MCF 10A (cell line): ENCODE measurements at regions of chr2 and their contacts with region 1.

Region 1: GRCh38 chr2:207238831-207239701 is 73.3 kb upstream of the KLF7 start:
- DNase-seq: peak; percentile 99
- H3K4me3 Mint-ChIP-seq: no peak overlapping the region
- H3K27ac Mint-ChIP-seq: no peak overlapping the region
- H3K4me1 Mint-ChIP-seq: peaks cover 15% of the 10 kb centered on the region
- H3K27me3 Mint-ChIP-seq: no peaks in the 10 kb centered on the region
- CTCF ChIP-seq: no peak

Region 2: GRCh38 chr2:206981739-206982340 is 257.2 kb before region 1 on chr2:
- CTCF ChIA-PET with region 1: interaction called, 14 read pairs
- POLR2A ChIA-PET with region 1: interaction called, 4 read pairs
- intact Hi-C with region 1: loop called (anchors 5 kb)
- DNase-seq: peak; percentile 76
- H3K4me3 Mint-ChIP-seq: no peak overlapping the region
- H3K27ac Mint-ChIP-seq: no peak overlapping the region
- H3K4me1 Mint-ChIP-seq: peaks cover 22% of the 10 kb centered on the region
- H3K27me3 Mint-ChIP-seq: no peaks in the 10 kb centered on the region
- CTCF ChIP-seq: peak; percentile 88

Region 3: DNA sequence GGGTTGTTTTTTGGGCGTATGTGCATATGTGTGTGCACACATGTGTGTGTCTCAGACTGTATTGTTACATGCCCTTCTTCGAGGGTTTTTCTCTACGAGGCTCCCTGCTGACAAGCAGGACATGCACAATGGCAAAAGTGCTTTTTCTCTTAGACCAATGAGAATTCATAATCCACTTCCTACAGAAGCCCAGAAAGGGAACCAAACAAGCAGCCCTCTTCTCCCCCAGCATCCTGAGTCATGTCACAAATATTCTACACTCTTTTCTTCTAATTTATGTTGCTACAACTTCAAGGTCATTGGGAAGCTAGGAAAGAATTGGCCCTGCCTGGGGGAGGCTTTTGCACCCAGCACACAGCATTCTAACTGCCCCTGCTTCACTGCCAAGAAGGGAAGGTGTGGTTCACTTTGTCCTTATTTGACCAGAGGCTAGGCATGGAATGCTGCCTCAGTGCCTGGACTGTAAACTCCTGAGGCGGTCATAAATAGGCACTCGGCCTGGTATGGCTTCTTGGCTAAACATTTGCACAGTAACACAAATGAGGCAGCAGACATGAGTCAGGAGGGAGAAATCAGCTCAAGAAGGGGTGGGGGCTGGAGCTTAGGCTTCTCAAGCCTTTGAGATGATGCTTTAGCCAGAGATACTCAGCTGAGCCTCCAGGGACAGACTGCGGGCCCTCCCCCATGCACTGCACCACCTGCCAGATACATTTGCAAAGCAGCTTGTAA is 19.4 kb after region 1 on chr2:
- CTCF ChIA-PET with region 1: interaction called, 9 read pairs
- POLR2A ChIA-PET with region 1: interaction called, 131 read pairs
- intact Hi-C with region 1: no loop called
- DNase-seq: peak; percentile 91
- H3K4me3 Mint-ChIP-seq: peak overlapping the region; percentile 26
- H3K27ac Mint-ChIP-seq: peak overlapping the region; percentile 84
- H3K4me1 Mint-ChIP-seq: peaks cover 65% of the 10 kb centered on the region
- H3K27me3 Mint-ChIP-seq: no peaks in the 10 kb centered on the region
- CTCF ChIP-seq: no peak

Region 4: DNA sequence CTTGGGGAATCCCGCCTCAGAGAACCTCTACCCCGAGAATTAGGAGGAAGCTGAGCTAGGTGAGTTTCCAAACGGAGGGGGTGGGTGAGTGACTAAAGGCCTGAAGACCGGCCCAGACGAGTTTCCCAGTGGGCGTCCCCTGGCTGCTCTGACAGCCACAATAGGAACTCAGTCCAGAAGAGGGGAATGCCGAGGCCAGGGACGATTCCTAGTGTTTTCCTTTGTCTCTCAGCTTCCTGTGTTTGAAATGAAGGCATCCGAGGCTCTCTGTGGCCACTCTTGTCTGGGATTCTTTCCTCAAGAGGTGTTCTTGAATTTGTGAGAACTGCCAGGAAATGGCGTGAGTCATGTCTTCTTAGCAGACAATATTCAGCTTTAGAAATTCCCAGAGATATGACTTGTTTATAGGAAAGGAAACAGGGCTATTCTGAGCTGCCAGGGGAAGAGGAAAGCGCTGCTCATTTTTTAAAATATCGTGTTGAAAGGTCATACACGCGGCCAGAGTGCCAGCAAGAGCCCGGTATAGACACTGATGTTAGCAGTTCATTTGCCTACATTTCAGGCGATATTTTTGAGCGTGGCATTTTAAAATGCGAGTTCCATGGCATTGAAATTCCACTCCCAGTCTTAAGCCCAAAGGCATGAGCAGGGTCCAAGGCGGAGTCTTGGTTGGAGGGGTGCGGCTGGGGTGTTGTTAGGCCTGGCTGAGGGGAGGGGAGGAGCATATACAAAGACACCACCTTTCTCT is 95.7 kb after region 1 on chr2:
- CTCF ChIA-PET with region 1: interaction called, 3 read pairs
- POLR2A ChIA-PET with region 1: interaction called, 66 read pairs
- intact Hi-C with region 1: loop called (anchors 1 kb)
- DNase-seq: peak; percentile 97
- H3K4me3 Mint-ChIP-seq: peak overlapping the region; percentile 70
- H3K27ac Mint-ChIP-seq: peak overlapping the region; percentile 98
- H3K4me1 Mint-ChIP-seq: peaks cover 58% of the 10 kb centered on the region
- H3K27me3 Mint-ChIP-seq: no peaks in the 10 kb centered on the region
- CTCF ChIP-seq: no peak

Region 5: DNA sequence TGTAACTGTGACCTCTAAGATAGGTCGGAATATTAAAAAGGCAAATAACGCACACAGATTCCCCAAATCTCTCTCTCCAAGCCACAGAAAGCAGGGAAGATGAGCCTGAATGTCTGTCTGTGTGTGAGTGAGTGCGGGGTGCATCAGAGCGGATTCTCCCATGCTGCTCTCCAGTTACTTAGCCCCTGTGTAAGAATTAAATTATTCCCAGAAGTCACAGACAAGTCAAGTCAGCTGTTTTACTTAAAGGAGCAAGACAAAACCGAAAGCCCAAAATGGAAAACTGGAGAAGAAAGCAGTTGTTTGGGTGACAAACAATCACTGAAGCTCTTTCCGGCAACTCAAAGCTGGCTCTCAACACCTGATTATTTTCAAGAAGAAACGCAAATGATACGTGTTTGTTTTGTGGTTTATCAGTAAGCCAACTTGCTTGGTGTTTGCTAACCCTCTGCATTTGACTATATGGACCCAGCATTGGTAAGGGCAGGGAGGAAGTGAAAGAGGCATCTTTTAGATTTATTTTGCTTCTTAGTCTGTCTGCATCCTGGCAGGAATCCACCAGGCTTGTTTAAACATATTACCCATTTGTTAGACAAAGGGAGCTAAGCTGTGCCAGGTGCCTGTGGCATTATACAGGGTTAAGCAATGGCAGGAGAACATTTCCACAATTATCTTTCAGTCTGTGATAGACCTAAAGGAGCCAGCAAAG is 169.2 kb after region 1 on chr2:
- CTCF ChIA-PET with region 1: interaction called, 4 read pairs
- POLR2A ChIA-PET with region 1: interaction called, 16 read pairs
- intact Hi-C with region 1: no loop called
- DNase-seq: peak; percentile 95
- H3K4me3 Mint-ChIP-seq: no peak overlapping the region
- H3K27ac Mint-ChIP-seq: no peak overlapping the region
- H3K4me1 Mint-ChIP-seq: peaks cover 21% of the 10 kb centered on the region
- H3K27me3 Mint-ChIP-seq: no peaks in the 10 kb centered on the region
- CTCF ChIP-seq: no peak